CD14-positive monocyte (primary cell): ENCODE measurements at regions of chr2 and their contacts with region 1.

Region 1: GRCh38 chr2:68251187-68251854 is 1.0 kb downstream of the PPP3R1 start:
- DNase-seq: peak; percentile 81 to 87 (median 86)
- H3K4me3 ChIP-seq: peak overlapping the region; percentile 73 to 98 (median 97)
- H3K4me3 Mint-ChIP-seq: peak overlapping the region; percentile 98 to 99
- H3K27ac ChIP-seq: peak overlapping the region; percentile 98 to 99
- H3K27ac Mint-ChIP-seq: peak overlapping the region; percentile 97 to 99 (median 99)
- H3K4me1 ChIP-seq: peaks cover 45 to 60% of the 10 kb centered on the region in 2 donors
- H3K4me1 Mint-ChIP-seq: peaks cover 34% of the 10 kb centered on the region
- H3K27me3 ChIP-seq: no peaks in the 10 kb centered on the region
- H3K27me3 Mint-ChIP-seq: peaks cover 0 to 2% (median 0%) of the 10 kb centered on the region in 3 donors
- CTCF ChIP-seq: peak; percentile 78

Region 2: DNA sequence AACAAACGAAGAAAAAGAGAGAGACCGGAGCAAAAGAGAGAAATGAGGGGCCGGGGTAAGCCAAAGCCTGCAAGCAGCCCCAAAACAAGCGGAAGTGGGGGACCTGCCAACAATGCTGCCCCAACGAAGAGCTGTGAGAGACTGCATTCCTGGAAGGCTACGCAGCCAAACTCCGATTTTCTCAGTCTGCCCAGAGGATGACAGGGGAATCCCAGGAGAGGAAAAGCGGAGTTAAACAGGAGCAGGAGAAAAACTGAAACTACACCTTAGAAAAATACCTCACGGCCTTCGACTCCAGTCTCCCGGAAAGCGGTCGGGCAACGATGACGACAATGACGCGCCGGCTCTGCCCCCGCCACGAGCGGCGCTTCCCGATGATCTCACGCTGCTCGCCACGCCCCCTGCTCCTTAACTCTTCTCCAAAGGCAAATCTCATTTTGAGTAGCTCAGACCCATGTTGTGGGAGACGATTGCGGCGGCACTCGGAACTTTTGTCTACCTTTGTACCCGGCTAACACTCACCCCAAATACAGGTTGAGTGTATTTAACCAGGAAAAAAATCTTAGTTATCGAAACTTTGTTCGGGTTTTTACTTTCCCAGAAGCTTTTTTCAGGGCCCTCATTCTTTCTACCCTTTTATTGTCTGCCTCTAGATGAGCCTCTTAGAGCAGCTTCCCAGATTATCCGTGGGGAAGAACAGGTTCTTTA is 188.5 kb before region 1 on chr2 and contains the start of gene C1D:
- intact Hi-C with region 1: loop called in 1 of 2 experiments (anchors 10 kb)
- DNase-seq: peak; percentile 88 to 93 (median 91)
- H3K4me3 ChIP-seq: peak within 1 kb of the TSS; percentile 90 to 95 (median 92)
- H3K4me3 Mint-ChIP-seq: peak within 1 kb of the TSS; percentile 87 to 95
- H3K27ac ChIP-seq: peak within 1 kb of the TSS; percentile 88 to 97
- H3K27ac Mint-ChIP-seq: peak within 1 kb of the TSS; percentile 97 to 99 (median 99)
- H3K4me1 ChIP-seq: peaks cover 6 to 32% of the 10 kb centered on the region in 2 donors
- H3K4me1 Mint-ChIP-seq: peaks cover 28% of the 10 kb centered on the region
- H3K27me3 ChIP-seq: no peaks in the 10 kb centered on the region
- H3K27me3 Mint-ChIP-seq: peaks cover 0 to 3% (median 1%) of the 10 kb centered on the region in 3 donors
- CTCF ChIP-seq: no peak
- polyA plus RNA-seq, gene C1D: 14.9 to 58.4 (median 49.7) TPM

Region 3: GRCh38 chr2:68157402-68158133 is 93.8 kb before region 1 on chr2 and contains the start of gene PNO1:
- intact Hi-C with region 1: loop called in 1 of 2 experiments (anchors 5 kb)
- DNase-seq: peak; percentile 89 to 97 (median 95)
- H3K4me3 ChIP-seq: peak within 1 kb of the TSS; percentile 73 to 91 (median 85)
- H3K4me3 Mint-ChIP-seq: peak within 1 kb of the TSS; percentile 97 to 99
- H3K27ac ChIP-seq: peak within 1 kb of the TSS; percentile 80 to 99
- H3K27ac Mint-ChIP-seq: peak within 1 kb of the TSS; percentile 99 to 100 (median 100)
- H3K4me1 ChIP-seq: peaks cover 27 to 35% of the 10 kb centered on the region in 2 donors
- H3K4me1 Mint-ChIP-seq: peaks cover 29% of the 10 kb centered on the region
- H3K27me3 ChIP-seq: no peaks in the 10 kb centered on the region
- H3K27me3 Mint-ChIP-seq: peaks cover 0 to 2% (median 0%) of the 10 kb centered on the region in 3 donors
- CTCF ChIP-seq: no peak
- polyA plus RNA-seq, gene PNO1: 4.7 to 14.0 (median 10.8) TPM

Region 4: GRCh38 chr2:68196120-68196716 is 55.1 kb before region 1 on chr2:
- intact Hi-C with region 1: loop called (anchors 2 to 5 kb)
- DNase-seq: peak; percentile 30 to 33 (median 31)
- H3K4me3 ChIP-seq: no peak overlapping the region
- H3K4me3 Mint-ChIP-seq: no peak overlapping the region
- H3K27ac ChIP-seq: no peak overlapping the region
- H3K27ac Mint-ChIP-seq: peak overlapping the region in 2 of 7 donors; percentile 15 to 54
- H3K4me1 ChIP-seq: peaks cover 10 to 24% of the 10 kb centered on the region in 2 donors
- H3K4me1 Mint-ChIP-seq: peaks cover 36% of the 10 kb centered on the region
- H3K27me3 ChIP-seq: no peaks in the 10 kb centered on the region
- H3K27me3 Mint-ChIP-seq: no peaks in the 10 kb centered on the region
- CTCF ChIP-seq: peak; percentile 96

Region 5: GRCh38 chr2:68423966-68424650 is 172.8 kb after region 1 on chr2:
- intact Hi-C with region 1: loop called in 1 of 2 experiments (anchors 10 kb)
- DNase-seq: peak; percentile 91 to 95 (median 94)
- H3K4me3 ChIP-seq: peak overlapping the region in 1 of 3 experiments; percentile 45
- H3K4me3 Mint-ChIP-seq: no peak overlapping the region
- H3K27ac ChIP-seq: peak overlapping the region; percentile 12 to 91
- H3K27ac Mint-ChIP-seq: no peak overlapping the region
- H3K4me1 ChIP-seq: peaks cover 75 to 79% of the 10 kb centered on the region in 2 donors
- H3K4me1 Mint-ChIP-seq: peaks cover 40% of the 10 kb centered on the region
- H3K27me3 ChIP-seq: no peaks in the 10 kb centered on the region
- H3K27me3 Mint-ChIP-seq: no peaks in the 10 kb centered on the region
- CTCF ChIP-seq: no peak